CD14-positive monocyte (primary cell): ENCODE measurements at regions of chr1 and their contacts with region 1.

Region 1: GRCh38 chr1:119838236-119838635 is 27.0 kb upstream of the REG4 start:
- DNase-seq: peak in 2 of 3 donors; percentile 1 to 69
- H3K4me3 ChIP-seq: no peak overlapping the region
- H3K4me3 Mint-ChIP-seq: no peak overlapping the region
- H3K27ac ChIP-seq: no peak overlapping the region
- H3K27ac Mint-ChIP-seq: no peak overlapping the region
- H3K4me1 ChIP-seq: no peaks in the 10 kb centered on the region
- H3K4me1 Mint-ChIP-seq: peaks cover 14% of the 10 kb centered on the region
- H3K27me3 ChIP-seq: no peaks in the 10 kb centered on the region
- H3K27me3 Mint-ChIP-seq: peaks cover 0 to 2% (median 2%) of the 10 kb centered on the region in 3 donors
- CTCF ChIP-seq: no peak

Region 2: GRCh38 chr1:119787776-119788175 is 50.5 kb before region 1 on chr1:
- intact Hi-C with region 1: loop called in 1 of 2 experiments (anchors 5 kb)
- DNase-seq: no peak
- H3K4me3 ChIP-seq: no peak overlapping the region
- H3K4me3 Mint-ChIP-seq: no peak overlapping the region
- H3K27ac ChIP-seq: no peak overlapping the region
- H3K27ac Mint-ChIP-seq: no peak overlapping the region
- H3K4me1 ChIP-seq: peaks cover 46 to 55% of the 10 kb centered on the region in 2 donors
- H3K4me1 Mint-ChIP-seq: peaks cover 50% of the 10 kb centered on the region
- H3K27me3 ChIP-seq: no peaks in the 10 kb centered on the region
- H3K27me3 Mint-ChIP-seq: peaks cover 0 to 2% (median 0%) of the 10 kb centered on the region in 3 donors
- CTCF ChIP-seq: no peak